PC-9 (cell line): ENCODE measurements at regions of chr2 and their contacts with region 1.

Region 1: GRCh38 chr2:181258720-181259119 is 198.5 kb upstream of the ITGA4 start:
- DNase-seq: peak in 1 of 2 experiments; percentile 68
- H3K4me3 ChIP-seq: no peak overlapping the region
- H3K27ac ChIP-seq: no peak overlapping the region
- H3K4me1 ChIP-seq: no peaks in the 10 kb centered on the region
- H3K27me3 ChIP-seq: no peaks in the 10 kb centered on the region
- CTCF ChIP-seq: no peak

Region 2: GRCh38 chr2:181243319-181243718 is 15.4 kb before region 1 on chr2:
- CTCF ChIA-PET with region 1: no interaction called
- POLR2A ChIA-PET with region 1: interaction called, 14 read pairs
- intact Hi-C with region 1: no loop called
- DNase-seq: no peak
- H3K4me3 ChIP-seq: no peak overlapping the region
- H3K27ac ChIP-seq: no peak overlapping the region
- H3K4me1 ChIP-seq: no peaks in the 10 kb centered on the region
- H3K27me3 ChIP-seq: no peaks in the 10 kb centered on the region
- CTCF ChIP-seq: no peak